ENCODE measurements at regions of chr6 and their contacts with region 1.

Region 1: DNA sequence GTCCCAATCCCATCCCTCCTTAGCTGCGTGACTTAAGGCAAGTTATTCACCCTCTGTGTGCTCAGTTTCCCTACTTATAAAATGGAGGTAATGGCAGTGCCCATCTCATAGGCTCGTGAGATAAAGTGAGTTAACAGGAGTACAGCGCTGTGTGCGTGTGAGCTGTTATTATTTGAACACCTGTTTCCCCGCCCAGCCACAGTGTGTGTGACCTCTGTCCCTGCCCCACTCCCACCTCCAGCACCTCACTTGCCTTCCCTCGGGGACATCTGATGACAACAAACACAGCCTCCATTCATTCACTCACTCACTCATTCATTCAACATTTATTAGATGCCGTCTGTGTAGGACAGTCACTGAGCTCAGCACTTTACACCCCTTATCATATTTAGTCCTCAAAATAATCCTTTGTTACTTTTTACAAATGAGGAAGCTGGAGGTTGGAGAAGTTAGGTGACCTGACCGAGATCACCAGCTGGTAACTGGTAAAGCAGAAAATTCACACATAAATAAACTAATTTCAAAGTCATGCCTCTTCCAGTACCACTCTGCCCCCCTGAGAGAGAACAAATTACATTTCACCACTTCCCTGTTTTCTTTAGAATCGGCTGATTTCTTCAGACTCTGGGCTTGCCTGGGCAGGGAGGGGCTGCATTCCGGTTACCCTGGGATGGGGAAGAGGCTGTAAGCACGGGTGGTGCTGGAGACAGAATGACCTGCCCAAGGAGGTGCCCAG is 58.6 kb downstream of the CPNE5 start:
- DNase-seq: no peak
- CTCF ChIP-seq: no peak

Region 2: GRCh38 chr6:36793913-36794712 is 13.5 kb after region 1 on chr6:
- CTCF ChIA-PET with region 1: interaction called, 23 read pairs
- POLR2A ChIA-PET with region 1: no interaction called
- DNase-seq: no peak
- CTCF ChIP-seq: no peak

Region 3: GRCh38 chr6:36809941-36810803 is 29.6 kb after region 1 on chr6:
- CTCF ChIA-PET with region 1: interaction called, 10 read pairs
- POLR2A ChIA-PET with region 1: no interaction called
- DNase-seq: no peak
- CTCF ChIP-seq: no peak

Measured in GM10248 (cell line).